ENCODE measurements at regions of chr4 and their contacts with region 1.

Region 1: GRCh38 chr4:36399762-36400353 is 118.4 kb downstream of the DTHD1 start:
- DNase-seq: peak in 6 of 9 donors; percentile 37 to 59 (median 56)
- ATAC-seq: peak; percentile 81
- H3K4me3 ChIP-seq: no peak overlapping the region
- H3K4me3 Mint-ChIP-seq: no peak overlapping the region
- H3K27ac ChIP-seq: no peak overlapping the region
- H3K27ac Mint-ChIP-seq: no peak overlapping the region
- H3K4me1 ChIP-seq: peaks cover 0 to 3% of the 10 kb centered on the region in 2 donors
- H3K4me1 Mint-ChIP-seq: peaks cover 0 to 9% (median 6%) of the 10 kb centered on the region in 7 donors
- H3K27me3 ChIP-seq: no peaks in the 10 kb centered on the region
- H3K27me3 Mint-ChIP-seq: peaks cover 0 to 26% (median 2%) of the 10 kb centered on the region in 5 donors

Region 2: GRCh38 chr4:36187723-36188333 is 212.0 kb before region 1 on chr4:
- CTCF ChIA-PET with region 1: no interaction called
- POLR2A ChIA-PET with region 1: no interaction called
- intact Hi-C with region 1: loop called in 1 of 2 experiments (anchors 5 kb)
- DNase-seq: peak in 3 of 9 donors; percentile 4 to 14 (median 7)
- ATAC-seq: no peak
- H3K4me3 ChIP-seq: no peak overlapping the region
- H3K4me3 Mint-ChIP-seq: no peak overlapping the region
- H3K27ac ChIP-seq: no peak overlapping the region
- H3K27ac Mint-ChIP-seq: no peak overlapping the region
- H3K4me1 ChIP-seq: peaks cover 5 to 52% of the 10 kb centered on the region in 2 donors
- H3K4me1 Mint-ChIP-seq: peaks cover 15 to 33% (median 21%) of the 10 kb centered on the region in 7 donors
- H3K27me3 ChIP-seq: no peaks in the 10 kb centered on the region
- H3K27me3 Mint-ChIP-seq: no peaks in the 10 kb centered on the region

Measured in naive thymus-derived CD4-positive, alpha-beta T cell (primary cell).